Activated CD4-positive, alpha-beta memory T cell treated with anti-CD3 and anti-CD28 coated beads for 36 hours (primary cell): ENCODE measurements at regions of chr6 and their contacts with region 1.

Region 1: GRCh38 chr6:43143235-43144124 is 27.6 kb upstream of the SRF start:
- DNase-seq: peak; percentile 87
- H3K4me3 Mint-ChIP-seq: no peak overlapping the region
- H3K27ac Mint-ChIP-seq: no peak overlapping the region
- H3K4me1 Mint-ChIP-seq: peaks cover 7% of the 10 kb centered on the region
- H3K27me3 Mint-ChIP-seq: no peaks in the 10 kb centered on the region

Region 2: GRCh38 chr6:42901536-42901957 is 241.9 kb before region 1 on chr6:
- CTCF ChIA-PET with region 1: interaction called, 36 read pairs
- POLR2A ChIA-PET with region 1: no interaction called
- intact Hi-C with region 1: loop called (anchors 1 kb)
- DNase-seq: peak; percentile 78
- H3K4me3 Mint-ChIP-seq: no peak overlapping the region
- H3K27ac Mint-ChIP-seq: no peak overlapping the region
- H3K4me1 Mint-ChIP-seq: peaks cover 8% of the 10 kb centered on the region
- H3K27me3 Mint-ChIP-seq: no peaks in the 10 kb centered on the region

Region 3: GRCh38 chr6:42978839-42979522 is 164.5 kb before region 1 on chr6 and contains the start of gene PEX6:
- CTCF ChIA-PET with region 1: interaction called, 12 read pairs
- POLR2A ChIA-PET with region 1: no interaction called
- intact Hi-C with region 1: no loop called
- DNase-seq: peak; percentile 97
- H3K4me3 Mint-ChIP-seq: peak within 1 kb of the TSS; percentile 94
- H3K27ac Mint-ChIP-seq: peak within 1 kb of the TSS; percentile 98
- H3K4me1 Mint-ChIP-seq: peaks cover 56% of the 10 kb centered on the region
- H3K27me3 Mint-ChIP-seq: no peaks in the 10 kb centered on the region
- total RNA-seq, gene PEX6: 25.6 to 26.4 TPM

Region 4: DNA sequence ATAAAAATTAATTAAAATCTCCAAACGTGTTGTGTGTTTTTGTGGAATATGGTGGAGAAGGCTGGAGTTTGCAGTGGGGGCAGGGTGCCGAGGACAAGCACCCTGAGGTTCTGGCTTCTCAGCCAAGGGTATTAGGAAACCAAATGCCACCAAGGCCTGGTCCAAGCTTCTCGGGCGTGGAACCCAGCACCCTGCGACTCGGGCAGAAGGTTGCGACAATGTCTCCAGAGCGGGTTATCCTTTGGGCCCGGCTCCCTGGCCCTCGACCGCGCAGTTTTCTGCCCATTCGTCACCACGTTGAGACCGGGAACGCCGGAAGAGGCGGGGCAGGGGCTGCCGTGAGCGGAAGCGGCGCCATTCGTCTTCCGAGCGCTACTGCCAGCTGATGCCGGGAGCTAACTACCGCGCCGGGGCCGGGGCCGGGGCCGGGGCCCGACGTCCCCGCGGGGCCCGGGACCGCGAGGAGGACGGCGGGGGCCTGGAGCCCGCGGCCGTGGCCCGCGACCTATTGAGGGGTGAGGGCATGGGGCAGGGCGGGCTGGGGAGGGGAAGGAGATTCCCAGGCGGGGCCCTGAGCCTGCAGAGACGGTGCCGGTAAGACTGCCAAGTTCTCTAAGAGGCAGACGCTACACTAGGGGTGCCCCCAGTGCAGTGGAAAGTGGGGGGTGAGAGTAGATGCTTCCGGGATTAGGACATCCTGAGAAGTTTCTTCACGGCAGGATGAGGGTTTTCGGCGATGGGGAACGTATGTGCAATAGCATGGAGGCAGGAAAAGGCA is 122.0 kb before region 1 on chr6 and contains the start of gene RRP36:
- CTCF ChIA-PET with region 1: interaction called, 11 read pairs
- POLR2A ChIA-PET with region 1: no interaction called
- intact Hi-C with region 1: no loop called
- DNase-seq: peak; percentile 79
- H3K4me3 Mint-ChIP-seq: peak within 1 kb of the TSS; percentile 98
- H3K27ac Mint-ChIP-seq: peak within 1 kb of the TSS; percentile 95
- H3K4me1 Mint-ChIP-seq: peaks cover 45% of the 10 kb centered on the region
- H3K27me3 Mint-ChIP-seq: no peaks in the 10 kb centered on the region
- total RNA-seq, gene RRP36: 54.0 to 55.6 TPM

Region 5: GRCh38 chr6:43070028-43070632 is 73.3 kb before region 1 on chr6:
- CTCF ChIA-PET with region 1: interaction called, 35 read pairs
- POLR2A ChIA-PET with region 1: no interaction called
- intact Hi-C with region 1: loop called (anchors 2 kb)
- DNase-seq: no peak
- H3K4me3 Mint-ChIP-seq: no peak overlapping the region
- H3K27ac Mint-ChIP-seq: no peak overlapping the region
- H3K4me1 Mint-ChIP-seq: no peaks in the 10 kb centered on the region
- H3K27me3 Mint-ChIP-seq: no peaks in the 10 kb centered on the region